Naive thymus-derived CD8-positive, alpha-beta T cell (primary cell): ENCODE measurements at regions of chr11 and their contacts with region 1.

Region 1: GRCh38 chr11:75270896-75271418 is 30.4 kb downstream of the TPBGL start:
- DNase-seq: peak in 4 of 10 donors; percentile 29 to 47 (median 38)
- ATAC-seq: no peak
- H3K4me3 Mint-ChIP-seq: peak overlapping the region in 2 of 10 donors; percentile 16 to 17
- H3K27ac Mint-ChIP-seq: peak overlapping the region; percentile 83 to 98 (median 92)
- H3K4me1 Mint-ChIP-seq: peaks cover 21 to 47% (median 43%) of the 10 kb centered on the region in 4 donors
- H3K27me3 Mint-ChIP-seq: no peaks in the 10 kb centered on the region

Region 2: DNA sequence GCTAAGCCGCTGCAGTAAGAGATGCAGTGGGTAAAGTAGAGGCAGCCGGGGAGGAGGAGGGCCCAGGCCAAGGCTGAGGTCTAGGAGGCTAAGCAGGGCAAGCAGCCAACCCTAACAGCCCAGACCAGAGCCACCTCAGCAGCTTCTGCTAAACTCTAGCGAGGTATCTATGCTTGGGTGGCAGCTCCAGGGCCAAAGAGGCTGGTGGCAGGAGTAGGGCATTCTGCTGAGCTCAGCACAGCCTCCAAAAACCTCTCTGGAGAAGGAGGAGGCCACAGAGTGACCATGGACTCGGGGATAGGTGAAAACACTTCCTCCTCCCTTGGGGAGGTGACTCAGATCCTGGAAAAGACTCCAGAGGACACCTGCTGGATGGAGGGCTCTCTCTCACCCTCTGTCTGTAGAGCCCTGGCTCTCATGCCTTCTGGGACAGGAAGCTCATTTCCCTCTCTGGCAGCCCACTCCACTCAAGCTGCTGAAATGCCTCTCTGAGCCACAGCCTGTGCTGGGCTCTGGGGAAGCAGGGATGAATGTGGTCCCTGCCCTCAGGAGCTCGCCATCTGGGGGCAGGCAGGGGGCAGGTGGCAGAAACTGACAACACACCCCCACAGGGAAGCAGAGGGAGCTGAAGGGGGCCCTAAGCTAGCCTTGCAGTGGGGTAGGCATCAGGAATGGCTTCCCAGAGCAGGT is 46.9 kb before region 1 on chr11:
- POLR2A ChIA-PET with region 1: no interaction called
- DNase-seq: no peak
- ATAC-seq: no peak
- H3K4me3 Mint-ChIP-seq: no peak overlapping the region
- H3K27ac Mint-ChIP-seq: peak overlapping the region in 2 of 10 donors; percentile 56
- H3K4me1 Mint-ChIP-seq: no peaks in the 10 kb centered on the region
- H3K27me3 Mint-ChIP-seq: peaks cover 1 to 6% (median 6%) of the 10 kb centered on the region in 5 donors

Region 3: DNA sequence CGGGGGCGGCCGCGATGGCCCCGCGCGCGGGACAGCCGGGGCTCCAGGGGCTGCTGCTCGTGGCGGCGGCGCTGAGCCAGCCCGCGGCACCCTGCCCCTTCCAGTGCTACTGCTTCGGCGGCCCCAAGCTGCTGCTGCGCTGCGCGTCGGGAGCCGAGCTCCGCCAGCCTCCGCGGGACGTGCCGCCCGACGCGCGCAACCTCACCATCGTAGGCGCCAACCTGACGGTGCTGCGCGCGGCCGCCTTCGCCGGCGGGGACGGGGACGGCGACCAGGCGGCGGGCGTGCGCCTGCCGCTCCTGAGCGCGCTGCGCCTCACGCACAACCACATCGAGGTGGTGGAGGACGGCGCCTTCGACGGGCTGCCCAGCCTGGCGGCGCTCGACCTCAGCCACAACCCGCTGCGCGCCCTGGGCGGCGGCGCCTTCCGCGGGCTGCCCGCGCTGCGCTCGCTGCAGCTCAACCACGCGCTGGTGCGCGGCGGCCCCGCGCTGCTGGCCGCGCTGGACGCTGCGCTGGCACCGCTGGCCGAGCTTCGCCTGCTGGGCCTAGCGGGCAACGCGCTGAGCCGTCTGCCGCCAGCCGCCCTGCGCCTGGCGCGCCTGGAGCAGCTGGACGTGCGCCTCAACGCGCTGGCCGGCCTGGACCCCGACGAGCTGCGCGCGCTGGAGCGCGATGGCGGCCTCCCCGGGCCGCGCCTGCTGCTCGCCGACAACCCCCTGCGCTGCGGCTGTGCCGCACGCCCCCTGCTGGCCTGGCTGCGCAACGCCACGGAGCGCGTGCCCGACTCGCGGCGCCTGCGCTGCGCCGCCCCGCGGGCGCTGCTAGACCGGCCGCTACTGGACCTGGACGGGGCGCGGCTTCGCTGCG is 29.7 kb before region 1 on chr11:
- POLR2A ChIA-PET with region 1: interaction called, 15 read pairs
- DNase-seq: peak; percentile 69 to 91 (median 84)
- ATAC-seq: peak; percentile 89 to 93
- H3K4me3 Mint-ChIP-seq: peak overlapping the region; percentile 55 to 81 (median 70)
- H3K27ac Mint-ChIP-seq: no peak overlapping the region
- H3K4me1 Mint-ChIP-seq: peaks cover 3 to 15% (median 10%) of the 10 kb centered on the region in 4 donors
- H3K27me3 Mint-ChIP-seq: peaks cover 17 to 58% (median 43%) of the 10 kb centered on the region in 5 donors

Region 4: DNA sequence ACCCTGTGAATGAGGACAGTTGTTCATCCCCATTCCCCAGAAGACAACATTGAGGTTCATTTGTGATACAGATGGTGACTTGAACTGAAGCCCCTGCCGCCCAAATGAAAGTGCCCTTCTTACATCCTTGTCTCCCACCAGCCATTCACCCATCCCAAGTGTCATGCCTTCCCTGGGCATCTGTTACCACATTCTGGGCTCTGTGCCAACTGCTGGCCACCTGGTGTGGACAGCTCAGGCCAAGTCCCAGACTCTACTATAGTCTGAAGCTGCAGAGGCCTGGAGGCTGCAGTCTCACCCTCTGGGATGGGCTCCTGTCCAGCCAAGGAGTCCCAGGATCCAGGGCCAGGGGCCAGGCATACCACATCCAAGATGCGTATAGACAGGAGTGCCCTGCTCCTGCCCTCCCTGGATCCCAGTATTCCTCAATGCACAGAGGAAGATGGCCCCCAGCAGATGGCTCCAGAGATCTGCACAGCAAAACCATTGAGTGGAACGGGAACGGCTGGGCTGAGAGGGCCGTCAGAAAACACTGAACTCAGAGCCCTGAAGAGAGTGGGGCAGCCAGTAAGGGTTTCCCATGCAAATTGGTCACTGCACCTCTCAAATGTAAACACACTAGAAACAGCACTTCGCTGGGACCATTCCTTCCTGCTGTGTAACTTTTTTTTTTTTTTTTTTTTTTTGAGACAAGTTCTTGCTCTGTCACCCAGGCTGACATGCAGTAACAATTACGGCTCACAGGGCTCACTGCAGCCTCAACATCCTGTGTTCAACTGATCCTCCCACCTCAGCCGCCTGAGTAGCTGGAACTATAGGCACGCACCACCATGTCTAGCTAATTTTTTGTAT is 57.7 kb after region 1 on chr11:
- POLR2A ChIA-PET with region 1: interaction called, 10 read pairs
- DNase-seq: peak; percentile 19 to 86 (median 58)
- ATAC-seq: peak; percentile 92 to 94
- H3K4me3 Mint-ChIP-seq: peak overlapping the region; percentile 36 to 79 (median 66)
- H3K27ac Mint-ChIP-seq: peak overlapping the region; percentile 31 to 96 (median 90)
- H3K4me1 Mint-ChIP-seq: peaks cover 51 to 86% (median 80%) of the 10 kb centered on the region in 4 donors
- H3K27me3 Mint-ChIP-seq: no peaks in the 10 kb centered on the region

Region 5: DNA sequence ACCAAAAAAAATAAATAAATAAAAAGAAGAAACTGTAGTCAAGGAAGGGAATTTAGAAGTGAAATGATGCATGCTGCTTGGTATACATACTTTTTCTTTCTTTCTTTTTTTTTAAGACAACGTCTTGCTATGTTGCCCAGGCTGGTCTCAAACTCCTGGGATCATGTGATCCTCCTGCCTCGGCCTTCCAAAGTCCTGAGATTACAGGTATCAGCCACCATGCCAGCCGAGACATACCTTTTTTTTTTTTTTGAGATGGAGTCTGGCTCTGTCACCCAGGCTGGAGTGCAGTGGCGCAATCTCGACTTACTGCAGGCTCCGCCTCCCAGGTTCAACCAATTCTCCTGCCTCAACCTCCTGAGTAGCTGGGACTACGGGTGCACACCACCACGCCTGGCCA is 102.2 kb after region 1 on chr11:
- POLR2A ChIA-PET with region 1: no interaction called
- DNase-seq: no peak
- ATAC-seq: no peak
- H3K4me3 Mint-ChIP-seq: no peak overlapping the region
- H3K27ac Mint-ChIP-seq: no peak overlapping the region
- H3K4me1 Mint-ChIP-seq: peaks cover 8 to 28% (median 15%) of the 10 kb centered on the region in 4 donors
- H3K27me3 Mint-ChIP-seq: no peaks in the 10 kb centered on the region

Region 6: GRCh38 chr11:75384438-75385080 is 113.6 kb after region 1 on chr11:
- POLR2A ChIA-PET with region 1: interaction called, 73 read pairs
- DNase-seq: peak; percentile 57 to 87 (median 76)
- ATAC-seq: peak; percentile 79 to 90
- H3K4me3 Mint-ChIP-seq: peak overlapping the region in 9 of 10 donors; percentile 57 to 90 (median 81)
- H3K27ac Mint-ChIP-seq: peak overlapping the region in 9 of 10 donors; percentile 82 to 96 (median 92)
- H3K4me1 Mint-ChIP-seq: peaks cover 13 to 28% (median 27%) of the 10 kb centered on the region in 4 donors
- H3K27me3 Mint-ChIP-seq: no peaks in the 10 kb centered on the region